ENCODE measurements at regions of chr10 and their contacts with region 1.

Region 1: DNA sequence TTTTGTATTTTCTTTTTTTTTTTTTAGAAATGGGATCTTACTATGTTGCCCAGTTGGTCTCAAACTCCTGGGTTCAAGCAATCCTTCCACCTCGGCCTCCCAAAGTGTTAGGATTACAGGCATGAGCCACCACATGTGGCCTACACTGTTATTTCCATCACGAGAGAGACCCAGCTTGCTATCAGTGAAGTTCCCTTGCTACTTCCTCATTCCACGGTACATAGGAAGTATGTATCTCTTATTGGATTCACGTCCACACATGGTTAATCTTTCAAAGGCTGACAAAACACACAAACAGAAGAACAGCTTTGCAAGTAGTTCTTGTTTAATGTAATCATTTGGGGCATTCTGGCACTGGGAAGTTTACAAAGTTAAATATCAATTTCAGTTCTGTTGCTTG is 50.9 kb downstream of the DCLRE1A start:
- DNase-seq: no peak
- H3K4me3 Mint-ChIP-seq: no peak overlapping the region
- H3K27ac Mint-ChIP-seq: no peak overlapping the region
- H3K4me1 Mint-ChIP-seq: no peaks in the 10 kb centered on the region
- H3K27me3 Mint-ChIP-seq: peaks cover 42% of the 10 kb centered on the region

Region 2: GRCh38 chr10:114103284-114103683 is 300.3 kb after region 1 on chr10:
- intact Hi-C with region 1: loop called (anchors 1 kb)
- DNase-seq: no peak
- H3K4me3 Mint-ChIP-seq: no peak overlapping the region
- H3K27ac Mint-ChIP-seq: no peak overlapping the region
- H3K4me1 Mint-ChIP-seq: peaks cover 21% of the 10 kb centered on the region
- H3K27me3 Mint-ChIP-seq: peaks cover 47% of the 10 kb centered on the region

Measured in activated T-helper 1 cell treated with anti-CD3 and anti-CD28 coated beads, Interleukin-12 subunit alpha, Interleukin-12 subunit beta, Interleukin-2, Interleukin-4 antibody, amounts not matched to agents 30 ng/mL and 10 ng/mL and 1 ng/mL, durations not matched to agents 14 hours and 24 hours and 36 hours (primary cell).